Activated CD4-positive, alpha-beta memory T cell treated with anti-CD3 and anti-CD28 coated beads, Interleukin-2, amount 10 ng/mL, durations not matched to agents 7 days and 5 days (primary cell): ENCODE measurements at regions of chr3 and their contacts with region 1.

Region 1: DNA sequence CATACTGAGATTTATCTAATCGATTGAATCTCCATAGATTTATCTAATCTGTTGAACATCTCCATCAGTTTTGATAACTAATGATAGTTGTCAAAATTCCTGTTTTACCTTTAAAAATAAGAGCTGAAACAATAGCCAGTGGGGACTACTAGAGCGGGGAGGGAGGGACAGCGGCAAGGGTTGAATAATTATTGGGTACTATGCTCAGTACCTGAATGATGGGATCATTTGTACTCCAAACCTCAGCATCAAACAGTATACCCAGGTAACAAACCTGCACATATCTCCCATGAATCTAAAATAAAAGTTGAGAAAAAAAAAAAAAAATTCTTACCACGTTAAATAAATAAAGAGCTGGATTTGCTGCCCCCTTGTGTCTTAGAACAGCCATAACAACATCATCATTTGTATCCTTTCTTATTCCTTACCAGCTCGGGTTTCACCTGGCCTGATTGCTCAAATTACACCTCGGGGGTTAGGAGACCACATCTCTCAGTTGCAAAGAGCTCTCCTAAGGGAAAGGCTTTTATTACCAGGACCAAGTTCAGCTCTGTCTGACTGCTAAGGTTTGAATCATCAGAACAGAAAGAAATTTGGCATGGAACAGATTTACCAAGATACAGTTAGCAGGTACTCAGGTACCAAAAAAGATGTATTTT is 25.7 kb upstream of the RPL39L start:
- DNase-seq: peak; percentile 25
- H3K4me3 Mint-ChIP-seq: no peak overlapping the region
- H3K27ac Mint-ChIP-seq: no peak overlapping the region
- H3K4me1 Mint-ChIP-seq: peaks cover 4% of the 10 kb centered on the region
- H3K27me3 Mint-ChIP-seq: peaks cover 23% of the 10 kb centered on the region

Region 2: DNA sequence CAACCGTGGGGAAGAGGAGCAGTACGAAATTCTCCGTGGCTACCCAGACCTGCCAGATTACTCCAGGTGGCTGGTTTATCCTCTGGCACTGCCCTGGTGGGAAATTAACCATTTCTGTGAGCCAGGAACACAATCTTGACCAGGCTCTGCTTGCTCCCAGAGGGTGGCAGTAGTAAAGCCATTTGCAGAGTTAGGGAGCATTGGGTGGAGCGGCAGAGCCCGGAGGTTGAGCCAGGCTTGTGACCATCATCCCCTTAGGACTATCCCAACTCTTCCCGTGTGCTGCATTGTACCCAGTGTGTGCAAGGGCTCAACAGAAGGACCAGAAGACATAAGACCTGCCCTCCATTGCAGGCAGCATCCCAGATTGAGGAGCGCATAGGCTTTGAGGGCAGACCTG is 442.6 kb before region 1 on chr3:
- CTCF ChIA-PET with region 1: no interaction called
- POLR2A ChIA-PET with region 1: no interaction called
- DNase-seq: no peak
- H3K4me3 Mint-ChIP-seq: no peak overlapping the region
- H3K27ac Mint-ChIP-seq: no peak overlapping the region
- H3K4me1 Mint-ChIP-seq: no peaks in the 10 kb centered on the region
- H3K27me3 Mint-ChIP-seq: peaks cover 19% of the 10 kb centered on the region

Region 3: GRCh38 chr3:186915806-186916796 is 248.9 kb before region 1 on chr3:
- CTCF ChIA-PET with region 1: no interaction called
- POLR2A ChIA-PET with region 1: no interaction called
- DNase-seq: peak; percentile 25
- H3K4me3 Mint-ChIP-seq: no peak overlapping the region
- H3K27ac Mint-ChIP-seq: no peak overlapping the region
- H3K4me1 Mint-ChIP-seq: peaks cover 36% of the 10 kb centered on the region
- H3K27me3 Mint-ChIP-seq: no peaks in the 10 kb centered on the region

Region 4: GRCh38 chr3:187000711-187001151 is 164.3 kb before region 1 on chr3:
- CTCF ChIA-PET with region 1: no interaction called
- POLR2A ChIA-PET with region 1: no interaction called
- DNase-seq: peak; percentile 33
- H3K4me3 Mint-ChIP-seq: peak overlapping the region; percentile 45
- H3K27ac Mint-ChIP-seq: peak overlapping the region; percentile 86
- H3K4me1 Mint-ChIP-seq: peaks cover 65% of the 10 kb centered on the region
- H3K27me3 Mint-ChIP-seq: no peaks in the 10 kb centered on the region

Region 5: DNA sequence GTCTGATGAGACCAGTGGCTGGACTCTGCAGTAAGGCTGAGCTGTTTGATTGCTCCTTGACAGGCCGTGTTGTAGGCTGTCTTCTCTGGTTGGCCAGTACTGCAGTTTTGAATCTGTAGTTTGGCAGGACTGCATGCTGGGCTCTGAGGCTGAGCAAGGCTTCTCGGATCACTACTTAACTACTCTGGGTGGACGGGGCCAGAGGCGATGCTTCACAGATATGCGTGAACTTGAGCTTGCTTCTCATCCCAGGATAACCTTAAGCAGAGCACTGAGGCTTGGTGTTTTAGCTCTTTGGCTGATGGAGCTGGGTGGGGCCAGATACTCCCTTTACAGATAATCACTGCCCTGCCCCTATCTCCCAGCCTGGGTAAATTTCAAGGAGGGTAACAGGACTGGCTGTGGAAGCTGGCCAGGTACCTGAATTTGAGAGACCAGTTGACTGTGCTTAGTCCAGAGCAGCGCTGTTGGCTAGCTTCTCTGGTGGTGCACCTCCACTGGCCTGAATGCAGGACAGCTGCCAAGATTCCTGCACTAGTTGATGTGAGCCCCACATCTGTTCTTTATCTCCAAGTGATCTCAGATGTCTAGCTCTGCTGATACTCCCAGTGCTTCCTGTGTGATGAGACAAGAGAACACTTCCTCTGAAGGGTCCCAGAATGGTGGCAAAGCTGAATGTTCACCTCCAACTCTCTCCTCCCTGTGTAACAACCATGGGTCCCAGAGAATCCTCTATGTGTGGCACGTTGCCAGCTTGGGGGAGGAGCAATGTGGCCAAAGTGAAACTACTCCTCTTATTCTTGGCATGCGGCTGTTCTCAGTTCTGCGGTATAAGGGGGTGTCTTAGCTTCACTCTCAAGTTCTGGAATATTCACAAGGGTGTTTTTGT is 63.6 kb before region 1 on chr3:
- CTCF ChIA-PET with region 1: interaction called, 12 read pairs
- POLR2A ChIA-PET with region 1: interaction called, 4 read pairs
- DNase-seq: peak; percentile 64
- H3K4me3 Mint-ChIP-seq: peak overlapping the region; percentile 56
- H3K27ac Mint-ChIP-seq: peak overlapping the region; percentile 44
- H3K4me1 Mint-ChIP-seq: peaks cover 56% of the 10 kb centered on the region
- H3K27me3 Mint-ChIP-seq: peaks cover 6% of the 10 kb centered on the region

Region 6: GRCh38 chr3:187120326-187120725 is 44.7 kb before region 1 on chr3:
- CTCF ChIA-PET with region 1: interaction called, 10 read pairs
- POLR2A ChIA-PET with region 1: no interaction called
- DNase-seq: no peak
- H3K4me3 Mint-ChIP-seq: no peak overlapping the region
- H3K27ac Mint-ChIP-seq: no peak overlapping the region
- H3K4me1 Mint-ChIP-seq: peaks cover under 1% of the 10 kb centered on the region
- H3K27me3 Mint-ChIP-seq: no peaks in the 10 kb centered on the region